Caco-2 (cell line): ENCODE measurements at regions of chr12 and their contacts with region 1.

Region 1: DNA sequence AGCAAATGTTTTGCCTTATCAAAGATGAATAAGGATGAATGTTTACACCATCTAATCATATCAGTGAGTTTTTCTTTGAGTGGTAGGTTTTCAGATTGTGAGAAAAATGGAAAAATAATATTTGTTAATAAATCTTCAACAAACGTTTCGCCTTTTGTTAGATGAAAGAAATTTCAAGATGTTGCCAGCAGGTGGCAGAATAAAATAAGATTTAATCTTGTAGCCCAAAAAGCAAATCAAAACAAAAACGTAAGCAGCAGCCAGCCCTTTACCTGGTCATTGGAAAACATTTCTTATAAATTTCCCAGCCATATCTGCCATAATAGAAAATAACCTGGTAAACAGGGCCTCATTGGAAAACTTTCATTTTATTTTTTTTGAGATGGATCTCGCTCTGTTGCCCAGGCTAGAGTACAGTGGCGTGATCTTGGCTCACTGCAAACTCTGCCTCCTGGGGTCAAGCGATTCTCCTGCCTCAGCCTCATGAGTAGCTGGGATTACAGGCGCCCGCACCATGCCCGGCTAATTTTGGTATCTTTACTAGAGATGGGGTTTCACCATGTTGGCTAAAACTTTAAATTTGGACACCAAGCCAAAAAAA is 15.4 kb upstream of the TMEM120B start:
- DNase-seq: peak in 1 of 2 experiments; percentile 59
- H3K4me3 ChIP-seq: no peak overlapping the region
- H3K4me3 Mint-ChIP-seq: no peak overlapping the region
- H3K27ac Mint-ChIP-seq: no peak overlapping the region
- H3K4me1 ChIP-seq: no peaks in the 10 kb centered on the region
- H3K4me1 Mint-ChIP-seq: no peaks in the 10 kb centered on the region
- H3K27me3 ChIP-seq: no peaks in the 10 kb centered on the region
- H3K27me3 Mint-ChIP-seq: no peaks in the 10 kb centered on the region
- CTCF ChIP-seq: peak; percentile 33 to 52

Region 2: DNA sequence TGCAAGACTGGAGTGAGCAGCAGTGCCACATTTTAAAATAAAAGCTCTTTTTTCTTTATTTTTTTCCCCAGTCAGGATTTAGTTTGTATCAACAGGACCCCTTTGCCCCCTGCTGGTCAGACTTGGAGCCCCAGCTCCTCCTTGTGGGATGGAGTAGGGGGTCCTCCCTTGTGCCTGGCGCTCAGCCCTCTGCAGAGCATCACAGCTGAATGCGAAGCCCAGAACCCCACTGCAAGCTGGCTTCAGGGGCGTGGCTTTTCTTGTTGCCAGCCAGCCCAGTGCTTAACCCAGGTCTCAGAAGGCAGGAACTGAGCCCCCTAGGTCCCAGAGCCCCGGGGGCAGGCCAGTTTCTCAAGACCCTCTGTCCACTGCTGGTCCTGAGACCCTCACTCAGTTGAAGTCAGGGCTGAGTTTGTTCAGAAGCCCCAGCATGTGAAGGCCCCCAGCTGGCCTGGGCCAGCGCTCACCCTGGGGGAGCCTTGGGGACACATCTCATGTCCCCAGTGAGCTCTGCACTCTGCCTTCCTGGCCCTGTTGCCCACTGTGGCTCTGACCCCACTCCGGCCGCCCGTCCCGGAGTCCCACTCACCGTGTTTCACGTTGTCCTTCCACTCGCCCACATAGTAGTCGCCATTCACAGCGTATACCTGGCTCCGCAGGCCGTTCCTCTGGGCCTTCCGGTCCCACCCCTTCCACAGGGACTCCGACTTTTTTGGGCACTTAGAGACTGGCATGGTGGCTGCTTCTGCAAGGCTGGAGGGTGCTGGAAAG is 28.3 kb before region 1 on chr12:
- CTCF ChIA-PET with region 1: no interaction called
- POLR2A ChIA-PET with region 1: no interaction called
- intact Hi-C with region 1: no loop called
- DNase-seq: peak; percentile 72
- H3K4me3 ChIP-seq: peak overlapping the region; percentile 33
- H3K4me3 Mint-ChIP-seq: peak overlapping the region; percentile 86
- H3K27ac Mint-ChIP-seq: peak overlapping the region; percentile 91
- H3K4me1 ChIP-seq: peaks cover 23% of the 10 kb centered on the region
- H3K4me1 Mint-ChIP-seq: peaks cover 17% of the 10 kb centered on the region
- H3K27me3 ChIP-seq: no peaks in the 10 kb centered on the region
- H3K27me3 Mint-ChIP-seq: no peaks in the 10 kb centered on the region
- CTCF ChIP-seq: peak; percentile 61 to 82

Region 3: GRCh38 chr12:121773011-121773777 is 76.0 kb after region 1 on chr12:
- CTCF ChIA-PET with region 1: interaction called, 3 read pairs
- POLR2A ChIA-PET with region 1: no interaction called
- intact Hi-C with region 1: loop called (anchors 1 kb)
- DNase-seq: peak; percentile 81 to 86
- H3K4me3 ChIP-seq: no peak overlapping the region
- H3K4me3 Mint-ChIP-seq: no peak overlapping the region
- H3K27ac Mint-ChIP-seq: peak overlapping the region; percentile 25
- H3K4me1 ChIP-seq: peaks cover 20% of the 10 kb centered on the region
- H3K4me1 Mint-ChIP-seq: peaks cover 11% of the 10 kb centered on the region
- H3K27me3 ChIP-seq: no peaks in the 10 kb centered on the region
- H3K27me3 Mint-ChIP-seq: no peaks in the 10 kb centered on the region
- CTCF ChIP-seq: peak; percentile 89 to 90

Region 4: DNA sequence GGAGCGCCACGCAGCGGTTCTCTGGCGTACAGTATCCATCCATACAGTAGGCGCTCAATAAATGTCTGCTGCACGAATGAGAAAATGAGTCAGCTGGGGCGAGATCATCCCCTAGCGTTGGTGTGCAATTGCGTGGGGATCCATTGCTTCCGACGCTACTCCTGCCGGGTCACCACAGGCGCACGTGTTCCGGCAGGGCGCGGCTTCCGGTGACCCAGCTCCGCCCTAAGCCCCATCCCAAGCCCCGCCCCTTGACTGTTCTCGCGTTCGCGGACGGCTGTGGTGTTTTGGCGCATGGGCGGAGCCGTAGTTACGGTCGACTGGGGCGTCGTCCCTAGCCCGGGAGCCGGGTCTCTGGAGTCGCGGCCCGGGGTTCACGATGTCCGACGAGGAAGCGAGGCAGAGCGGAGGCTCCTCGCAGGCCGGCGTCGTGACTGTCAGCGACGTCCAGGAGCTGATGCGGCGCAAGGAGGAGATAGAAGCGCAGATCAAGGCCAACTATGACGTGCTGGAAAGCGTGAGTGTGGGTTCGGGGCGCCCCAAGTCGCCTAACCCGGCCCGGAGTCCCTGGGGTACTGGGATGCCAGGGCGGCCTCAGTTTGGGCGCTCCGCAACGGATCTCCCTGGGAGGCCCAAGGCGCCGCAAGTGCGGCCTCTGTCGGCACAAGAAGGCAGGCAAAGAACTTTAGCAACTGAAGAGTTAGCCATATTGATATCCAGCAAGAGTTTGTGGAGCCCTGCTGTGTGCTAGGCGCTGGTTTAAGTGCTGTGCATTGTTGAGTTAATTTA is 191.5 kb after region 1 on chr12 and contains the start of gene PSMD9:
- CTCF ChIA-PET with region 1: no interaction called
- POLR2A ChIA-PET with region 1: no interaction called
- intact Hi-C with region 1: loop called (anchors 5 kb)
- DNase-seq: peak; percentile 98 to 99
- H3K4me3 ChIP-seq: peak within 1 kb of the TSS; percentile 84
- H3K4me3 Mint-ChIP-seq: peak within 1 kb of the TSS; percentile 84
- H3K27ac Mint-ChIP-seq: peak within 1 kb of the TSS; percentile 86
- H3K4me1 ChIP-seq: peaks cover 10% of the 10 kb centered on the region
- H3K4me1 Mint-ChIP-seq: peaks cover 15% of the 10 kb centered on the region
- H3K27me3 ChIP-seq: no peaks in the 10 kb centered on the region
- H3K27me3 Mint-ChIP-seq: no peaks in the 10 kb centered on the region
- CTCF ChIP-seq: peak; percentile 50 to 78
- total RNA-seq, gene PSMD9: 53.0 and 63.3 TPM in 2 replicates